ENCODE measurements at regions of chr1 and their contacts with region 1.

Region 1: GRCh38 chr1:245045087-245045881 is 109.5 kb upstream of the KIF26B start:
- DNase-seq: peak; percentile 31
- H3K4me3 Mint-ChIP-seq: no peak overlapping the region
- H3K27ac Mint-ChIP-seq: no peak overlapping the region
- H3K4me1 Mint-ChIP-seq: peaks cover 17% of the 10 kb centered on the region
- H3K27me3 Mint-ChIP-seq: no peaks in the 10 kb centered on the region
- CTCF ChIP-seq: no peak

Region 2: GRCh38 chr1:244835276-244836134 is 209.8 kb before region 1 on chr1 and contains the start of gene COX20:
- CTCF ChIA-PET with region 1: interaction called, 40 read pairs
- POLR2A ChIA-PET with region 1: interaction called, 99 read pairs
- intact Hi-C with region 1: loop called (anchors 1 kb)
- DNase-seq: peak; percentile 98
- H3K4me3 Mint-ChIP-seq: peak within 1 kb of the TSS; percentile 81
- H3K27ac Mint-ChIP-seq: peak within 1 kb of the TSS; percentile 99
- H3K4me1 Mint-ChIP-seq: peaks cover 33% of the 10 kb centered on the region
- H3K27me3 Mint-ChIP-seq: no peaks in the 10 kb centered on the region
- CTCF ChIP-seq: no peak
- total RNA-seq, gene COX20: 44.6 and 46.1 TPM in 2 replicates

Region 3: GRCh38 chr1:244864253-244865027 is 180.8 kb before region 1 on chr1 and contains the start of gene HNRNPU:
- CTCF ChIA-PET with region 1: interaction called, 174 read pairs
- POLR2A ChIA-PET with region 1: interaction called, 175 read pairs
- intact Hi-C with region 1: loop called (anchors 1 kb)
- DNase-seq: peak; percentile 99
- H3K4me3 Mint-ChIP-seq: peak within 1 kb of the TSS; percentile 93
- H3K27ac Mint-ChIP-seq: peak within 1 kb of the TSS; percentile 96
- H3K4me1 Mint-ChIP-seq: peaks cover 32% of the 10 kb centered on the region
- H3K27me3 Mint-ChIP-seq: no peaks in the 10 kb centered on the region
- CTCF ChIP-seq: peak; percentile 51
- total RNA-seq, gene HNRNPU: 454 and 572 TPM in 2 replicates

Region 4: GRCh38 chr1:244964112-244964971 is 80.9 kb before region 1 on chr1:
- CTCF ChIA-PET with region 1: interaction called, 21 read pairs
- POLR2A ChIA-PET with region 1: interaction called, 33 read pairs
- intact Hi-C with region 1: no loop called
- DNase-seq: peak; percentile 57
- H3K4me3 Mint-ChIP-seq: peak overlapping the region; percentile 35
- H3K27ac Mint-ChIP-seq: peak overlapping the region; percentile 93
- H3K4me1 Mint-ChIP-seq: peaks cover 27% of the 10 kb centered on the region
- H3K27me3 Mint-ChIP-seq: no peaks in the 10 kb centered on the region
- CTCF ChIP-seq: no peak

Region 5: GRCh38 chr1:244989813-244990212 is 55.5 kb before region 1 on chr1:
- CTCF ChIA-PET with region 1: interaction called, 26 read pairs
- POLR2A ChIA-PET with region 1: interaction called, 3 read pairs
- intact Hi-C with region 1: no loop called
- DNase-seq: peak; percentile 77
- H3K4me3 Mint-ChIP-seq: no peak overlapping the region
- H3K27ac Mint-ChIP-seq: peak overlapping the region; percentile 17
- H3K4me1 Mint-ChIP-seq: peaks cover 24% of the 10 kb centered on the region
- H3K27me3 Mint-ChIP-seq: no peaks in the 10 kb centered on the region
- CTCF ChIP-seq: no peak

Region 6: DNA sequence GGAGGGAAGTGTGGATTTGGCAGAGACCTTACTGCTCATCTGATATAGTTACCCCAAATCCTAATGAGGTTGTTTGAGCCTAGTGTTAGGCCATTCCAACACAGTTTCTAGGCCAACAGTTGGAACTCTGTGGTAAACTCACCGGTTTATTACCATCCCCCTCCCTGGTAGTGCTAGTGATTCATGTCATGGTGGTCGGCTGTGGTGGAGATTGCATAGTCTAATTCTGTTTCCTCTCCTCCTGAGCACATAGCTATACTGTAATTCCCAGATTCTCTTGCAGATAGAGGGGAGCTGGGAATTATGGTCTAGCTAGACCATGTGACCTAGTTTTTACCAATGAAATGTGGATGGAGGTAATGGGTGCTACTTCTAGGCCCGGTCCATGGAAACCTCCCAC is 14.2 kb before region 1 on chr1:
- CTCF ChIA-PET with region 1: interaction called, 45 read pairs
- POLR2A ChIA-PET with region 1: interaction called, 6 read pairs
- intact Hi-C with region 1: no loop called
- DNase-seq: no peak
- H3K4me3 Mint-ChIP-seq: no peak overlapping the region
- H3K27ac Mint-ChIP-seq: no peak overlapping the region
- H3K4me1 Mint-ChIP-seq: peaks cover 6% of the 10 kb centered on the region
- H3K27me3 Mint-ChIP-seq: no peaks in the 10 kb centered on the region
- CTCF ChIP-seq: no peak

Region 7: GRCh38 chr1:245099401-245099800 is 54.1 kb after region 1 on chr1:
- CTCF ChIA-PET with region 1: no interaction called
- POLR2A ChIA-PET with region 1: no interaction called
- intact Hi-C with region 1: no loop called
- DNase-seq: no peak
- H3K4me3 Mint-ChIP-seq: no peak overlapping the region
- H3K27ac Mint-ChIP-seq: no peak overlapping the region
- H3K4me1 Mint-ChIP-seq: no peaks in the 10 kb centered on the region
- H3K27me3 Mint-ChIP-seq: no peaks in the 10 kb centered on the region
- CTCF ChIP-seq: no peak

Region 8: DNA sequence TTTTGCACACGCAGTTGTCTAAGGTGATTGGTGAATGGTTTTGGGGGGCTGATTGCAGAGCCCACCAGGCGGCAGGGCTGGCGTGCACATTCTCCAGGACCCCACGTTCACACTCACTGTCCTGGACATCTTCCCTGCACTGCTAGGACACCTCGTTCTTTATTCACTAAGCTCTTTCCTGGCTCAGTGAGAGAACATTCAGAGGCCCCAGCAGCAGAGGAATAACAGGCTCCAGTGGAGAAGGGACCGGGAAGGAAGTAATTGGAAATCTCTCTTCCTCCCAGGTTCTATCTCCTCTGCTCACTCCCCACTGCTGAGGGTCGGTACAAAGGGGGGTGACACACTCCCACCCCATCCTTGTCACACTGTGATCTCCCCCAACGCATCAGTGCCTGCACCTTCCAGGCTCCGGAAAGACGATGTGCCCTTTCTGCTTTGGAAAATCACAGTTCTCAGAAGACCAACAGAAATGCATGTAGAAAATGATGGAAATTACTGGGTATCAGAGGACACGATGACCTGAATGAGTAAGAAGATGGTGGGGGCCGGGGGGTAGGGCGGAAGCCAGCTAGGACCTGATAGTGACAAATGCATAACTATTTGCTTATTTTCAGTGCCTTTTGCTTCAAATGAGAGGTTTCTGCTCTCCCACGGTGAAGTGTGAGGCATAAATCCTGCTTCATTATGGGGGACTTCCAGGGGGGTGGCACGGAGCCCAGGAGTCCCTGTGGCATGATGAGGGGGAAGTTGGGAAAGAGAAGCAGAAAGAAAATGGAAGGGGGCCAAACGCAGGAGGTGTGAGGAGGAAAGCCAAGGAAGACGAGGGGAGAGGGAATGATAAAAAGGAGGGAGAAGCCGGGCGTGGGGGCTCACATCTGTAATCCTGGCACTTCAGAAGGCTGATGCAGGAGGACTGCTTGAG is 84.3 kb after region 1 on chr1:
- CTCF ChIA-PET with region 1: no interaction called
- POLR2A ChIA-PET with region 1: no interaction called
- intact Hi-C with region 1: no loop called
- DNase-seq: peak; percentile 24
- H3K4me3 Mint-ChIP-seq: no peak overlapping the region
- H3K27ac Mint-ChIP-seq: no peak overlapping the region
- H3K4me1 Mint-ChIP-seq: peaks cover 14% of the 10 kb centered on the region
- H3K27me3 Mint-ChIP-seq: peaks cover 47% of the 10 kb centered on the region
- CTCF ChIP-seq: no peak

Measured in MCF 10A (cell line).